Activated T-helper 2 cell treated with anti-CD3 and anti-CD28 coated beads, Interferon-gamma antibody, Interleukin-2, Interleukin-4, amounts not matched to agents 10 μg/mL and 5 μg/mL and 100 μg/mL, durations not matched to agents 14 hours and 24 hours and 36 hours (primary cell): ENCODE measurements at regions of chr18 and their contacts with region 1.

Region 1: GRCh38 chr18:13216092-13216582 is 2.4 kb upstream of the LDLRAD4 start:
- DNase-seq: peak; percentile 42
- H3K4me3 Mint-ChIP-seq: peak overlapping the region; percentile 85
- H3K27ac Mint-ChIP-seq: peak overlapping the region; percentile 83
- H3K4me1 Mint-ChIP-seq: peaks cover 26% of the 10 kb centered on the region
- H3K27me3 Mint-ChIP-seq: peaks cover 34% of the 10 kb centered on the region

Region 2: DNA sequence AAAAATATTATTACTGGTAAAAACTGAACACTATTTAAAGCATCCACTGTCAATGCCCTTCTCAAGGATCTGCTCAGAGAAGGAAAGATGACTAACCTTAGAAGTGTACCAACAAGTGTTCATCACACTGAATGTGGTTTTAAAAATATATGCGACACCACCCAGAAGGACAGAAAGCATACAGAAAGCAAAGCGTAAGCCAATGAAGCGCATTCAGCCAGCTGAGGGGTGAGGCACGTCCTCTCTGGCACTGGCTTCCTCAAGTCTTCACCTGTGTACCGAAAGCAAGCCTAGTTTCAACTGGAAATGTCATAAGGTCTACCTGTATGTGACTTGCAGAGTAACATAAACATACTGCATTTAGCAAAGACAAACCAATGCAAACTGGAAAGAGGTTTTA is 424.5 kb before region 1 on chr18:
- intact Hi-C with region 1: no loop called
- DNase-seq: no peak
- H3K4me3 Mint-ChIP-seq: no peak overlapping the region
- H3K27ac Mint-ChIP-seq: no peak overlapping the region
- H3K4me1 Mint-ChIP-seq: peaks cover 12% of the 10 kb centered on the region
- H3K27me3 Mint-ChIP-seq: no peaks in the 10 kb centered on the region

Region 3: GRCh38 chr18:13253762-13254688 is 37.9 kb after region 1 on chr18:
- intact Hi-C with region 1: no loop called
- DNase-seq: no peak
- H3K4me3 Mint-ChIP-seq: no peak overlapping the region
- H3K27ac Mint-ChIP-seq: no peak overlapping the region
- H3K4me1 Mint-ChIP-seq: no peaks in the 10 kb centered on the region
- H3K27me3 Mint-ChIP-seq: no peaks in the 10 kb centered on the region

Region 4: DNA sequence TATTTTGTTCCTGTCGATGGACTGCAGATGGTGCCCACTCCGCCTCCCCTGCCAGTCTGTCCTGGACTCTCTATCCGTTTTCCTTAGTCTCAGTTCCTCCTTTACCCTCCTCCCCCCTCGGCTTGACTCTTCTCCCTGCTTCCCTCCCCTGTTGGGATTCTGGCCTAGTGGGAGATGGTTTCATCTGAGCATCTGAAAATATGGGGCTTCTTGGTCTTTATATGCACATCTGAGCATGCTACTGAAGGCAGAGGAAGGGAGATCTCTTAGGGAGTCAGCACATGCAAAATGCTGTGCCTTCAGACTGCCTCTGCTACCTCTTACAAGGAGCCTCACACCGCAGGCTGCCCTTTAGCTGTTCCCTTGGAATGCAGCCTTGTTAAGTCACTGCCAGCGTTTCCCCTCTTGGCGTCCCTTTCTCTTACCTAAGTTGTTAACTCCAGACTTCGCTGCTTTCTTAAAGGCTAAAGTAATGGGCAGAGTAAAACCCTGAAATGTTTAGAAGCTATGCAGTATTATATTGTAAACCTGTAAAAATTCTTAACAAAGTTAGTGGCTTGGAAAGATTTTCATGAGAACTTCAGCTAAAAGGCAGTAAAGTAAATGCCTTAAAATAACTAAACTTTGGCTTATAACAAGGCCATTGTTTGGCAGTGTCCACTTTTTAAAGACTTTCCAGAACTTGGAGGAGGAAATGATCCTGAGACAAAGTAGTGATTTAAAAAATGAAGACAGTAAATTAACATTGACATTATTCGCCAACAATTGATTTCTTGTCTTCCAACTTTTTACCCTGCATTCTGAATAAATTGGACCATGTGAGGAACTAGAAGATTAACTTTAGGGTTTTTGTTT is 52.2 kb after region 1 on chr18:
- intact Hi-C with region 1: loop called (anchors 1 kb)
- DNase-seq: no peak
- H3K4me3 Mint-ChIP-seq: peak overlapping the region; percentile 47
- H3K27ac Mint-ChIP-seq: peak overlapping the region; percentile 84
- H3K4me1 Mint-ChIP-seq: peaks cover 63% of the 10 kb centered on the region
- H3K27me3 Mint-ChIP-seq: no peaks in the 10 kb centered on the region

Region 5: DNA sequence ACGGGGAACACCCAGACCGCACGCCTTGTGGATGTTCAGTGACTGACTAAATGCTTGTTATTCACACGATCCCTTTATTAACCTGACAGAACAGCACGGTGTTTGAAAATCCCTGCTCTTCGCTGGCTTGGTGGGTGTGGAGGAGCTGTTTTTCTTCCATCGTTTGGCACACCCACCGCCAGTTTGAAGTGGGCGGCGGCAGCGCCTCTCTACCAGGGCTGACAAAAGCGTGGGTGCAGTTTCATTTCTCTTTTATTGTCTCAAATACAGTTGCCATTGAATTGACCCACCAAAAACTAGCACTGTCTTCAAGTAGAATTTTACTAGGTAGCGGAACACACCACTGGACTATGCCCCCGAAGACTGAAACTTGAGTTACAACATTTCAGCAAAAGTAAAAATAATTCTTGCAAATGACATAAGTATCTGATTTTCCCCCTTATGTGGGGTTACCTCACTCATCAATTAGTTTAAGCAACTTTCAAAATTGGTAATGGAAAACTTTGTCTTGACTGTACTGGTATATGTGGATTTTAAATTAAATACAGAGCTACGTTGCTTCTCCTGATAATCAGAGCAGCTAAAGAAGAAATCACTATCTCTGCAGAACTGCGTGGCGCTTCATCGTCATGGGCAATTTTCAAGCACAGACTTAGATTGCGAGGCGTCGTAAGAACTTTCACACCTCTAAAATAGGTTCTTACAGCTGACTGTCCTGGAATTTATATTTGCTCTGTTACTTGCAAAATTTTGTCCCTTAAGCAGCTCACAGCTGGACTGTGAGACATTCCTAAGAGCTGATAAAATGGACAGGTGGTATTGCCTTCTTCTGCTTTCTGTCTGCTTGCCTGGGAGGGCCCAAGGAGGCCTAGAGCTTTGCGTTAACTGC is 63.3 kb after region 1 on chr18:
- intact Hi-C with region 1: no loop called
- DNase-seq: no peak
- H3K4me3 Mint-ChIP-seq: peak overlapping the region; percentile 60
- H3K27ac Mint-ChIP-seq: peak overlapping the region; percentile 60
- H3K4me1 Mint-ChIP-seq: peaks cover 70% of the 10 kb centered on the region
- H3K27me3 Mint-ChIP-seq: no peaks in the 10 kb centered on the region

Region 6: GRCh38 chr18:13375302-13376255 is 159.4 kb after region 1 on chr18:
- intact Hi-C with region 1: loop called (anchors 1 kb)
- DNase-seq: peak; percentile 77
- H3K4me3 Mint-ChIP-seq: peak overlapping the region; percentile 53
- H3K27ac Mint-ChIP-seq: peak overlapping the region; percentile 93
- H3K4me1 Mint-ChIP-seq: peaks cover 70% of the 10 kb centered on the region
- H3K27me3 Mint-ChIP-seq: no peaks in the 10 kb centered on the region

Region 7: GRCh38 chr18:13530879-13531387 is 314.8 kb after region 1 on chr18:
- intact Hi-C with region 1: loop called (anchors 10 kb)
- DNase-seq: no peak
- H3K4me3 Mint-ChIP-seq: no peak overlapping the region
- H3K27ac Mint-ChIP-seq: no peak overlapping the region
- H3K4me1 Mint-ChIP-seq: peaks cover 11% of the 10 kb centered on the region
- H3K27me3 Mint-ChIP-seq: no peaks in the 10 kb centered on the region

Region 8: GRCh38 chr18:13629841-13630715 is 413.9 kb after region 1 on chr18:
- intact Hi-C with region 1: loop called (anchors 1 kb)
- DNase-seq: no peak
- H3K4me3 Mint-ChIP-seq: no peak overlapping the region
- H3K27ac Mint-ChIP-seq: no peak overlapping the region
- H3K4me1 Mint-ChIP-seq: peaks cover 16% of the 10 kb centered on the region
- H3K27me3 Mint-ChIP-seq: no peaks in the 10 kb centered on the region